B cell (primary cell): ENCODE measurements at regions of chr19 and their contacts with region 1.

Region 1: GRCh38 chr19:39445265-39446111 is at the start of gene SUPT5H:
- DNase-seq: peak; percentile 99
- ATAC-seq: peak; percentile 94
- H3K4me3 ChIP-seq: peak within 1 kb of the TSS; percentile 69 to 98 (median 95)
- H3K4me3 Mint-ChIP-seq: peak within 1 kb of the TSS; percentile 97
- H3K27ac ChIP-seq: peak within 1 kb of the TSS; percentile 91 to 95
- H3K27ac Mint-ChIP-seq: peak within 1 kb of the TSS; percentile 97
- H3K4me1 ChIP-seq: peaks cover 42 to 56% of the 10 kb centered on the region in 2 donors
- H3K4me1 Mint-ChIP-seq: peaks cover 59% of the 10 kb centered on the region
- H3K27me3 ChIP-seq: no peaks in the 10 kb centered on the region
- H3K27me3 Mint-ChIP-seq: no peaks in the 10 kb centered on the region
- CTCF ChIP-seq: no peak
- total RNA-seq, gene SUPT5H: 195 and 203 TPM in 2 replicates

Region 2: GRCh38 chr19:39341719-39342604 is 103.5 kb before region 1 on chr19 and contains the start of gene SAMD4B:
- CTCF ChIA-PET with region 1: no interaction called
- POLR2A ChIA-PET with region 1: interaction called, 6 read pairs
- intact Hi-C with region 1: loop called (anchors 1 kb)
- DNase-seq: peak; percentile 99
- ATAC-seq: peak; percentile 92
- H3K4me3 ChIP-seq: peak within 1 kb of the TSS; percentile 88 to 98 (median 98)
- H3K4me3 Mint-ChIP-seq: peak within 1 kb of the TSS; percentile 97
- H3K27ac ChIP-seq: peak within 1 kb of the TSS; percentile 79 to 86
- H3K27ac Mint-ChIP-seq: peak within 1 kb of the TSS; percentile 95
- H3K4me1 ChIP-seq: peaks cover 32 to 46% of the 10 kb centered on the region in 2 donors
- H3K4me1 Mint-ChIP-seq: peaks cover 65% of the 10 kb centered on the region
- H3K27me3 ChIP-seq: no peaks in the 10 kb centered on the region
- H3K27me3 Mint-ChIP-seq: no peaks in the 10 kb centered on the region
- CTCF ChIP-seq: peak; percentile 81
- total RNA-seq, gene SAMD4B: 90.0 and 96.1 TPM in 2 replicates

Region 3: DNA sequence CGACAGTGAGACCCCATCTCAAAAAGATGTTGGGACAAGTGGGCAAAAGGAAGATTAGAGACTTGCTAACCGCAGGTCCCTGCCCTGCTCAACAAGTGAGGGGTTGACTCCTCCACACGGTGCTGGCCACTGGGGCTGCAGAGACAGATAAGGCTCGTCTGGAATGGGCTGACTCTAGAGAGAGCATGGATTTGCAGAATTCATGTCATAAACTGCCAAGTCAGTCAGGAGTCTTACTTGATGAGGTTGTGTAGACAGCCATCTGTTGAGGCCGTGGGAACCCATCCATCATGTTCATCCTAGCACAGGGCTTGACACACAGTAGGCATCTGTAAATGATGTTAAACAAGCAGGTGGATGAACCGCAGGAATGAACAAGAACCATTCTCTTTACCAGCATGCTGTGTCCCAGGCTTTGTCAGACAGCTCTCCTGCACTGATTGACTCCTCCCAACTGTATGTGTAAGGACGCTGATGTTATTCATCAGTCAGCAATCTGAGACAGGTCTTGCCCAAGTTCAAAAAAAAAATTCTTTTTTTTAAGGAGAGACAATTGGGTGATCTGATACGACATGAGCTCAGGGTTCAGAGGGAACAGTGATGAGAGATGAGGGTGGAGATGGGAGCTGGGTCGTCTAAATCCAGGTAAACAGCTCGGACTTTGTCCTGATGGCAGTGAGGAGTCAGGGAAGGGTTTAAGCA is 63.4 kb before region 1 on chr19:
- CTCF ChIA-PET with region 1: no interaction called
- POLR2A ChIA-PET with region 1: no interaction called
- intact Hi-C with region 1: no loop called
- DNase-seq: no peak
- ATAC-seq: no peak
- H3K4me3 ChIP-seq: no peak overlapping the region
- H3K4me3 Mint-ChIP-seq: no peak overlapping the region
- H3K27ac ChIP-seq: no peak overlapping the region
- H3K27ac Mint-ChIP-seq: peak overlapping the region; percentile 20
- H3K4me1 ChIP-seq: peaks cover 0 to 6% of the 10 kb centered on the region in 2 donors
- H3K4me1 Mint-ChIP-seq: peaks cover 9% of the 10 kb centered on the region
- H3K27me3 ChIP-seq: no peaks in the 10 kb centered on the region
- H3K27me3 Mint-ChIP-seq: no peaks in the 10 kb centered on the region
- CTCF ChIP-seq: no peak

Region 4: DNA sequence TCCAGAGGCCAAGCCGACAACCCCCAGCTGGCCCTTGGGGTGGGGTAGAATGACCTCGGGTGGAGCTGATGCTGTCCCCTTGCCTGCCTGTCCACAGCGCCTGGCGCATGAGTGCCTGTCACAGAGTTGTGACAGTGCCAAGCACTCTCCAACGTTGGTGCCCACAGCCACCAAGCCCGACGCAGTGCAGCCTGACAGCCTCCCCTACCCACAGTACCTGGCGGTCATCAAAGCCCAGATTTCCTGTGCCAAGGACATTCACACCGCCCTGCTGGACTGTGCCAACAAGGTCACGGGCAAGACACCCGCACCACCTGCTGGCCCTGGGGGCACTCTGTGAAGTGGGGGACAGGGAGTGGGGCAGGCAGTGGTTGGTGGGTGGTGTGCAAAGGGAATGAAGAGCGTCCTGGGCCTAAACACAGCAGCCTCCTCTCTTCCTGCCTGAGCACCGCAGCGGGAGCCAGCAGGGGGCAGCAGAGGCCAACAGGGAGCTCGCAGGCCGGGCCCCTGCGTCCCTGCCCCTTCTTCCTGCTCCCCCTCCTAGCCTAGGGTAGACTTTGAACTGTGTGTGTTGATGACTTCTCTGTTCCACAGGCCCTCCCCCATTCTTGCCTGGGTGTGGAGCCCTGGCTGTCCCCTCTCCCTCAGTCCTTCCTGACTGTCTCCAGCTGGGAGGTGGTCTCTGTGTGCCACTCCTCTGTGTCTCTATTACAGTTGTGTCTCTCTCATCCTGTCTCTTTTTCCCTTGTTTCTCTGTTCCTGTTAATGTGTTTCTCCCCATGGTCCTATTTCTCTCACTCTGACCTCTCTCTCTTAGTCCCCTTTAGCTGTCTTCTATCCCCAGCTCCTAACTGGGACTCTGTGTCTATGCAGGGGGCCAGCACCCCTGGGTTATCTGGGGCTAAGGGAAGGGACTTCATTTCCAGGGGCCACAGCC is 47.9 kb before region 1 on chr19:
- CTCF ChIA-PET with region 1: interaction called, 4 read pairs
- POLR2A ChIA-PET with region 1: interaction called, 4 read pairs
- intact Hi-C with region 1: loop called (anchors 1 kb)
- DNase-seq: peak; percentile 92
- ATAC-seq: peak; percentile 50
- H3K4me3 ChIP-seq: peak overlapping the region in 4 of 5 experiments; percentile 1 to 21 (median 13)
- H3K4me3 Mint-ChIP-seq: peak overlapping the region; percentile 70
- H3K27ac ChIP-seq: peak overlapping the region; percentile 90 to 100
- H3K27ac Mint-ChIP-seq: peak overlapping the region; percentile 96
- H3K4me1 ChIP-seq: peaks cover 49 to 57% of the 10 kb centered on the region in 2 donors
- H3K4me1 Mint-ChIP-seq: peaks cover 65% of the 10 kb centered on the region
- H3K27me3 ChIP-seq: no peaks in the 10 kb centered on the region
- H3K27me3 Mint-ChIP-seq: no peaks in the 10 kb centered on the region
- CTCF ChIP-seq: peak; percentile 94

Region 5: DNA sequence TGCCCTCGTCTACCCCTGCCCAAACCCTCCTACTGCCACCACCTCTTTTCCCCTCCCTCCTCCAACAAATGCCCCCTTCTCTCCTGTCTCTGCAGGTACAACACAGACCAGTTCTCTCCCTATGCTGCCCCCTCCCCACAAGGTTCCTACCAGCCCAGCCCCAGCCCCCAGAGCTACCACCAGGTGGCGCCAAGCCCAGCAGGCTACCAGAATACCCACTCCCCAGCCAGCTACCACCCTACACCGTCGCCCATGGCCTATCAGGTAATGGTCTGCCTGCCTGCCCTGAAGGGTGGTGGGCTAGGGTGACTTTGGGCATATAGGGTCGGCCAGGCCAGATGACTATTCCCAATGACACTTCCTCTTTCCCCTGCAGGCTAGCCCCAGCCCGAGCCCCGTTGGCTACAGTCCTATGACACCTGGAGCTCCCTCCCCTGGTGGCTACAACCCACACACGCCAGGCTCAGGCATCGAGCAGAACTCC is 28.7 kb after region 1 on chr19:
- CTCF ChIA-PET with region 1: interaction called, 13 read pairs
- POLR2A ChIA-PET with region 1: no interaction called
- intact Hi-C with region 1: no loop called
- DNase-seq: peak; percentile 77
- ATAC-seq: peak; percentile 87
- H3K4me3 ChIP-seq: no peak overlapping the region
- H3K4me3 Mint-ChIP-seq: no peak overlapping the region
- H3K27ac ChIP-seq: no peak overlapping the region
- H3K27ac Mint-ChIP-seq: no peak overlapping the region
- H3K4me1 ChIP-seq: no peaks in the 10 kb centered on the region
- H3K4me1 Mint-ChIP-seq: peaks cover 1% of the 10 kb centered on the region
- H3K27me3 ChIP-seq: no peaks in the 10 kb centered on the region
- H3K27me3 Mint-ChIP-seq: no peaks in the 10 kb centered on the region
- CTCF ChIP-seq: peak; percentile 74

Region 6: DNA sequence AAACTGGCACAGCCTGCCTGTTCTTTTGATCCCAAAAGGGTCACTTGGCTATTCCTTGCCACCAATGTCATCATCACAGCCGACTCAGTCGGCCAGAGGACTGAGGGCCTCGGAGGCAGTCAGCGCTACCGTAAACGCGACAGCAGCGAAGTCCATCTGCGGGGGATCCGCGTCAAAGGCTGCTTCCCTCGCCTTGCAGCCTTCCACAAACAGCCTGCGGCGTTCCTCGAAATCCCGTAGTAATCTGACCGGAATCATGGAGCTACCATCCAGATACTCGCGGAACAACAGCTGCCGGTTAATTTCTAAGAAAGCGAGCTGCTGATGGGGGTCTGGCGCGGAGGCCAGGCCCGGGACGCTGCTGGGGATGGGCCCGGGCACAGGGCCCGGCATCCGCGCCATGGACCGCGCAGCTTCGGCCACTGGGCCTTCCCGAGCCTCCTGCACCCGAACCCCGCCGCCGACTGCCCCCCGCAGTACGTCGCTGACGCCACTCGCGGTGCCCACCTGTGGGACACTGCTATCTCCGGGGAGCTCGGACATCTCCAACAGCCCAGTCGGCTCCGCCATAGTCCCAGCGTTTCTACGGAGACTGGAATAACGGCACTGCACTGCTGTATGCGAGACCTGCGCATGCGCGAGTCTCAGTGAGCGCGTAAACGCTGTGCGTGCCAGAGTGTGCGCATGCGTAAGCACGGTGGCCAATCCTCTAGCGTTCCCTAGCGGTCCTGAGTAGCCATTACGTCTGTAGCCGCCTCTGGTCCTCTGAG is 86.9 kb after region 1 on chr19 and contains the start of gene EID2B:
- CTCF ChIA-PET with region 1: interaction called, 25 read pairs
- POLR2A ChIA-PET with region 1: no interaction called
- intact Hi-C with region 1: loop called (anchors 1 kb)
- DNase-seq: peak; percentile 97
- ATAC-seq: peak; percentile 99
- H3K4me3 ChIP-seq: peak within 1 kb of the TSS; percentile 75 to 98 (median 78)
- H3K4me3 Mint-ChIP-seq: peak within 1 kb of the TSS; percentile 96
- H3K27ac ChIP-seq: peak within 1 kb of the TSS; percentile 37 to 83
- H3K27ac Mint-ChIP-seq: peak within 1 kb of the TSS; percentile 92
- H3K4me1 ChIP-seq: peaks cover 13 to 14% of the 10 kb centered on the region in 2 donors
- H3K4me1 Mint-ChIP-seq: peaks cover 25% of the 10 kb centered on the region
- H3K27me3 ChIP-seq: no peaks in the 10 kb centered on the region
- H3K27me3 Mint-ChIP-seq: no peaks in the 10 kb centered on the region
- CTCF ChIP-seq: peak; percentile 98
- total RNA-seq, gene EID2B: 6.0 and 7.6 TPM in 2 replicates

Region 7: DNA sequence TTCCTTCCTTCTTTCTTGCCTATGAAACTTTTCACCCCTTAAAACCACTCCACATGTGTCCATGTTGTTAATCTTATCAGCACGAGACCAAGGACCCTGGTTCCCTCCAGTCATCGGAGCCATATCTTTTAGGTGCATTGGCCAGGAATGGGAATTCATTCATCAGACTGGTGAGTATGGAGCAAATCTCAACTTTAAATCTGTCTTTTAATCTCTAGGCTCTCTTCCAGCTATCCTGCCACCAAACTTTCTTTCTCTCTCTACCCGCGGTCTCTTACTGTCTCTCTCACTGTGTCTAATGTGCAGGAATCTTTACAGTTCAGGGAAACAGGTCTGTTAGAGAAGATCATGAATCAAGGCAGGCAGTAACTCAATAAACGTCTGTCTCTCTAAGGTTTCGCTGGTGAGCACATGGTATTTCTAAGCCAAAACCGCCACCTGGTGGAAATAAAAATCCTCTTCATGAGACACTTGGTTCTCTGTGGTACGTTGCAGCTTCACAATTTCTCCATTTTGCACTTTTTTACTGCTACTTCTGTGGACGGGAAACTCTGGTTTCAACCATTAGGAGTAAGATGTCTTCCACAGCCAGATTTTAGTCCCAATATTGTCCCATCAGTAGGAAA is 226.4 kb after region 1 on chr19:
- CTCF ChIA-PET with region 1: interaction called, 12 read pairs
- POLR2A ChIA-PET with region 1: no interaction called
- intact Hi-C with region 1: no loop called
- DNase-seq: peak; percentile 75
- ATAC-seq: peak; percentile 51
- H3K4me3 ChIP-seq: no peak overlapping the region
- H3K4me3 Mint-ChIP-seq: no peak overlapping the region
- H3K27ac ChIP-seq: no peak overlapping the region
- H3K27ac Mint-ChIP-seq: no peak overlapping the region
- H3K4me1 ChIP-seq: peaks cover 0 to 3% of the 10 kb centered on the region in 2 donors
- H3K4me1 Mint-ChIP-seq: peaks cover 4% of the 10 kb centered on the region
- H3K27me3 ChIP-seq: peaks cover 0 to 12% (median 4%) of the 10 kb centered on the region in 4 experiments
- H3K27me3 Mint-ChIP-seq: peaks cover 33% of the 10 kb centered on the region
- CTCF ChIP-seq: peak; percentile 72